ENCODE measurements at regions of chr17 and their contacts with region 1.

Region 1: DNA sequence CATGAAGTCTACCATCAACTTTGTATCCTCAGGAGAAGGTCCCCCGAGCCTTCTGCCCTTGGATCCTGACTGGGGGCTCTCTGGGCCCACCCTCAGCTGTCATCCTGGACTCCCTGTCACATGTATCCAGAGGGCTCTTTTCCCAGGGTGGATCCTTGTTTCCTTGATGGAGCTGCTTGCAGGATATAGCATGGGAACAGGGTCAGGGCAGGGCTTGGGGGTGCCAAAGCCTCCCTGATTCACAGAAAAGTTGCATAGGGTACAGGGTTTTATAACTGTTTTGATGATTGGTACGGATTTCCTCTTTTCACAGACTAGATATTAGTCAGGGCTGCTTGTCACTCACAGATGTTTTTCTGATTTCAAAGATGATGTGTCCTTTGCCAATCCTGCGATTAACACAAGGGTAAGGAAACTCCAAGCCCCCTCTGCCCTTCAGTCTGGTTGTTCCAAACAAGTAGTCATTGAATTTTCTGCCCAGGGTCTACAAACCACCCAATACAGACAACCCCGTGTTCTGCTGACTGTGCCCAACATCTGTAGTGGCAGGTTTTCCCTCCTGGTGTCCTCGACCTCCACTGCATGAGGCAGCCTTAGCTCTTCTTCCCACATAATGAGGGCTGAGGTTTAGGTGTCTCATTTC is 20.6 kb upstream of the SLC35G3 start:
- DNase-seq: peak; percentile 38
- H3K4me3 Mint-ChIP-seq: peak overlapping the region; percentile 69
- H3K27ac Mint-ChIP-seq: peak overlapping the region; percentile 98
- H3K4me1 Mint-ChIP-seq: peaks cover 90% of the 10 kb centered on the region
- H3K27me3 Mint-ChIP-seq: no peaks in the 10 kb centered on the region

Region 2: DNA sequence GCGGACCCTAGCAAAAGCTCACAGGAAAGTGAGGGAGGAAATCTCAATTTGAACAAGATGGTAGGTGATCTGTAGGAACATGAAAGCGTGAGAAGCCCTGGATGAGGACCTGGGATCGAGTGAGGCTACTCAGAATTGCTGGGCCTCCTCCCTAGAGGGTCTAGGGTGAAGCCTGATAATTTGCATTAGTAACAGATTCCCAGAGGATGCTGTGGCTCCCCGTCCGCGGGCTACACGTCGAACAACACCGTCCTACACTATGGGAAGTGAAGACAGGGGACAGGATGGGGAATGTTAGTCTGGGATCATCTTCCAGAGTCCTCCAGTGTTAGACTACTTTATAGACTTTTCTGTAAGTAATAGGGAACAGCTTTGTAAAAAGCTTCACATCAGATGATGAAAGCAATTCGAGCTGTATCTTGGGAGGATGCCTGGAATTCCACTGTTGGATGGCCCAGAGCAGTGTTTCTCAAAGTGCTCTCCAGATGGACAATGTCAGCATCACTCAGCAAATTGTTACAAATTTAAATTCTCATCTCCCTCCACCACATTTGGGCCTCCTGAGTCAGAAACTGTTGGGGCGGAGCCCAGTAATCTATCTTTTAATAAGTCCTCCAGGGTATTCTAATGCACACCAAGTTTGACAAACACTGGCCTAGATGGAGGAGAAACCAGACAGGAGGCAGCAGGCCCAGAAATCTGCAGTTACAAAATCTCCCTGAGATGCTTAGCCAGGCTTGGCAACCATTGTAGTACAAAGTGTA is 86.8 kb before region 1 on chr17:
- CTCF ChIA-PET with region 1: no interaction called
- POLR2A ChIA-PET with region 1: no interaction called
- DNase-seq: no peak
- H3K4me3 Mint-ChIP-seq: no peak overlapping the region
- H3K27ac Mint-ChIP-seq: no peak overlapping the region
- H3K4me1 Mint-ChIP-seq: no peaks in the 10 kb centered on the region
- H3K27me3 Mint-ChIP-seq: no peaks in the 10 kb centered on the region

Region 3: DNA sequence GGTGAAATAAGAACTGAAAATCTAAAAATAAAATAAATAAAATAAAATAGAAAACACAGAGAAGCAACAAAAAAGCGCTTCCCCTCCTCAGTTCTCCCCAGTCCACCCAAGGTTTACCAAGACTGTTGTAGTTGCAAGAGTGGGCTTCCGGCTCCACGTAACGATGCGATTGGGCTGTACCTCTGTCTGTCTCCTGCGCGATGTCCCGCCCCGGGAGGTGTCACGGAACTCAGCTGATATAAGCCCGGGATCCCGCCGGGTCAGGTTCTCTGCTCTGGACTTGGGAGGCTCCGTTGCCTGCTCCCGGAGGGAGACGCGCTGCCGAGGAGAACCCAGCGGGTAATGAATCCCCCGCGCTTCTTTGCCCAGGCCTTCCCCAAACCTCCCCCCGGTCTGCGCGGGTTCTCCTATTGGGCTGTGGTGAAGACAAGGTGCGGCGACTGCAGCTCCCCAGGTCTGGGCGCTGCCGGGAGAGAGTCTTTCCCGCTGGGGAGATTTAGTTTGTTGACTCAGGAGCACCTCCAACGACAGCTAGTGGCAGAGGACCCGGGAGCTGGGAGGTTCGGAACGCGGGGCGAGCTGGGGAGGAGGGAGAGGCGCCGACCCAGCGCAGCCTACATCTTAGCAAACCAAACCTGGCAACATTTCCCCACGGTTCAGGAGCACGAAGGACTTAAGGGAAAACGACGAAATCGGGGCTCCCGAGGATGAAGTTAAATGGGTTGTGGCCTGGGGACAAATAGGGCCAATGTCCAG is 28.2 kb after region 1 on chr17 and contains the start of gene SLFN5:
- CTCF ChIA-PET with region 1: interaction called, 9 read pairs
- POLR2A ChIA-PET with region 1: interaction called, 16 read pairs
- DNase-seq: peak; percentile 96
- H3K4me3 Mint-ChIP-seq: peak within 1 kb of the TSS; percentile 94
- H3K27ac Mint-ChIP-seq: peak within 1 kb of the TSS; percentile 97
- H3K4me1 Mint-ChIP-seq: peaks cover 53% of the 10 kb centered on the region
- H3K27me3 Mint-ChIP-seq: no peaks in the 10 kb centered on the region
- total RNA-seq, gene SLFN5: 199 to 212 TPM